ENCODE measurements at regions of chr1 and their contacts with region 1.

Region 1: DNA sequence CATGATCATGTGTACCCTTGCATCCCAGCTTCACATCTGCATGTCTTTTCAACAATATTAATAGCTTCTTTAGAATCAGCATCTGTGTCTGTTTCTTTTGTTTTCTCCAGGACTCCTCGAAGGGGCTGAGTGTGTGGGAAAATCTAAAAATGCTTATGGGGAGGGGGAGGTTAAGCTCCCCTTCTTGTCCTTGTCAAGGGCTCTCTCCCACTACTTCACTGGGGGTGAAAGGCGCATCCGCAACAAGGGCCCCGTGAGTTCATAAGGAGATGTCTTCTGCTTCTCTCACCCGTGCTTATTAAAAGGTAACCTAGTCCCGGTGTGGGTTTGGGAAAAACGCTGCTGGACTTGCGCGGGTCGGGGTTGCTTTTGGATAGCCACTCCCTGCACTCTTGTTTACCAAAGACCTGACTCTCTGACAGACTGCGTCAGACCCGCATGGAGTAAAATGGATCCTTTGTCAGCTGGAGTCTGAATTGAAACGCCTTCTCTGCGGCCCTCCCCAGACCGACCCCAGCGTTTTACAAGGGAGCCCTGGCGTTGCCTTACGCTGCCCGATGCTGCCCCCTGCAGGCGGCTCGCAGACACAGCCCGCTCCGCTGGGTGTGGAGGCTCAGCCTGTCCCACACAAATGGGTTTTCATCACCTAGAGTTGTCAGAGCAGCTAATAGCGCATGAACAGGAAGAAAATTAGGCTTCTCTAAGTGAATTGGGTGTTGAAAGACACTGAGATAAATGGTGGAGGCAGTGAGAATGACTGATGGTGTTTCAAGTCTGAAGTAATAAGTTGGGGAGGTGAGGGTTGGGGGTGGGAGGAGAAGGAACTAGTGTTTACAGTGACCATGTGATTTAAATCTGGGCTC is 53.8 kb downstream of the IER5 start:
- DNase-seq: peak; percentile 70
- H3K4me3 ChIP-seq: peak overlapping the region in 1 of 2 donors; percentile 16
- H3K27ac ChIP-seq: no peak overlapping the region
- H3K4me1 ChIP-seq: no peaks in the 10 kb centered on the region
- H3K27me3 ChIP-seq: no peaks in the 10 kb centered on the region
- CTCF ChIP-seq: peak; percentile 95 to 99 (median 98)
- POLR2A ChIP-seq: no peak

Region 2: DNA sequence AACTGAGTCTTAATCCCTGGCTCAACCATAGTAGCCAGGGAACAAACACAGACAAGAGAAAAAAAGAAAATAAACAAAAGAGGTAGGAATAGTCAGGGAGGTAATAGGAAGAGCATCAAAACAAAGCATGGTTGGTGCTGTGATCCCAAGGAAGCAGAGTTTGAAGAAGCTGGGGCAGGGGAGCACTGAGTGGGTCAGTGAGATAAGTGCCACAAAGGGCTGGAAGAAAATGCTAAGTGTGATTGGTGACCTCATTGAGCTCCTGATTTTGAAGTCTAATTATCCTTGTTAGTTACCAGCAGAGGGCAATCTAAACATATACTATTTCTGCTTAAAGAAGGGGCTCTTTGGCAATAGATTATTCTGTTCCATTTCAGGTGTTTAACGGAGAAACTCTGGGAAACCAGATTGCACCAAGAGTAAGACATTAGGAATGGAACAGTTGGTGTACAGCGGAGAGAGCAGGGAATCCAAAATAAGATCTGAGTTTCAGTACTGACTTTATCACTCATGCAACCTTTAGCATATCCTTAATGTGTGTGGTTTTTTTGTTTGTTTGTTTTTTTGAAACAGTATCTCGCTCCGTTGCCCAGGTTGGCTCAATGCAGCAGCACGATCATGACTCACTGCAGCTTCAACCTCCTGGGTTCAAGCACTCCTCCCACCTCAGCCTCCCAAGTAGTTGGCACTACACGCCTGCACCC is 260.4 kb before region 1 on chr1:
- intact Hi-C with region 1: loop called (anchors 2 kb)
- DNase-seq: no peak
- H3K4me3 ChIP-seq: no peak overlapping the region
- H3K27ac ChIP-seq: no peak overlapping the region
- H3K4me1 ChIP-seq: no peaks in the 10 kb centered on the region
- H3K27me3 ChIP-seq: no peaks in the 10 kb centered on the region
- CTCF ChIP-seq: peak in 3 of 4 experiments; percentile 42 to 66 (median 53)
- POLR2A ChIP-seq: no peak

Region 3: GRCh38 chr1:181033799-181034451 is 108.4 kb before region 1 on chr1 and contains the start of gene MR1:
- intact Hi-C with region 1: loop called (anchors 5 kb)
- DNase-seq: peak; percentile 58
- H3K4me3 ChIP-seq: peak within 1 kb of the TSS; percentile 32 to 40
- H3K27ac ChIP-seq: peak within 1 kb of the TSS; percentile 91 to 96
- H3K4me1 ChIP-seq: peaks cover 6% of the 10 kb centered on the region
- H3K27me3 ChIP-seq: no peaks in the 10 kb centered on the region
- CTCF ChIP-seq: no peak
- POLR2A ChIP-seq: peak; percentile 85
- total RNA-seq, gene MR1: 14.3 to 17.5 TPM

Region 4: GRCh38 chr1:182227864-182228547 is 1085.7 kb after region 1 on chr1:
- intact Hi-C with region 1: no loop called
- DNase-seq: no peak
- H3K4me3 ChIP-seq: no peak overlapping the region
- H3K27ac ChIP-seq: peak overlapping the region; percentile 41 to 63
- H3K4me1 ChIP-seq: no peaks in the 10 kb centered on the region
- H3K27me3 ChIP-seq: no peaks in the 10 kb centered on the region
- CTCF ChIP-seq: no peak
- POLR2A ChIP-seq: no peak

Measured in prostate gland (tissue), 2 donors.